Mammary epithelial cell (primary cell): ENCODE measurements at regions of chr1 and their contacts with region 1.

Region 1: DNA sequence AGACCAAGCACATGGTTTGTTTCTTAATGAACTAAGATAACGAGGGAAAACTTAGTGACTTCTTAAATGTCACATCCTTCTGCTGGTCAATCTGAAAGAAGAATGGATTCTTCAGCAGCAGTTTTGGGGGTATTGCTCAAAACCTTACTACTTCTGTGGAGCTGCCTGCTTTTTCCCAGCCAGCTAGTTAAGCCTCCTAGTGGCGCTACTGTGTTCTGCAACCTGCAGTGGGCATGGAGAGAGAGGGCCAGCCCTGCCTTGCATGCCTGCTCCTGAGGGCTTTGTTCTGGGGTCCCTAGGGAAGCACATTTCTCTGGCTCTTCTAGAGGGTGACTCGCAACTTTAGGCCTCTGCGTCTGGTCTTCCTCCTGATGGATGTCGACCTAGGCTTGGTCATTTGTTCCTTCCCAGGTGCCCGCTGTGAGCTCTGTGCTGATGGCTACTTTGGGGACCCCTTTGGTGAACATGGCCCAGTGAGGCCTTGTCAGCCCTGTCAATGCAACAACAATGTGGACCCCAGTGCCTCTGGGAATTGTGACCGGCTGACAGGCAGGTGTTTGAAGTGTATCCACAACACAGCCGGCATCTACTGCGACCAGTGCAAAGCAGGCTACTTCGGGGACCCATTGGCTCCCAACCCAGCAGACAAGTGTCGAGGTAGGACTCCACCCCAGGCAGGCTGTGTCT is 42.0 kb downstream of the LAMC2 start:
- DNase-seq: no peak
- H3K4me3 ChIP-seq: no peak overlapping the region
- H3K27ac ChIP-seq: no peak overlapping the region
- H3K4me1 ChIP-seq: peaks cover 52% of the 10 kb centered on the region
- H3K27me3 ChIP-seq: no peaks in the 10 kb centered on the region
- CTCF ChIP-seq: peak; percentile 75 to 79

Region 2: DNA sequence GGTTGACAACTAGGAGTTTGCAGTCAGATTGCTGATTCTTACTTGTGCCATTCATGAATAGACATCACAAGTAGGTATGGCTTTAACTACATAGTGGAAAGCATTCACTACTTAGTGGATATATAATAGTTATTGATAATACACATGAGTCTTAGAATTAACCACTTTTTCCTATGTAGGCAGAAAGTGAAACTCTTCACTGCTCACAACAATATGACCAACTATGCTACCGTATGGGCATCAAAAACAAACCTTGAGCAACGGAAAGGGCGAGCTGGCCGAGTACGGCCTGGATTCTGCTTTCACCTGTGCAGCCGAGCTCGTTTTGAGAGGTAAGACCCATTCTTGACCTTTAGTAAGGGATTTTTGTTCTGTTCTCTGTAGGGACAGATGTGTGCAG is 350.3 kb before region 1 on chr1:
- CTCF ChIA-PET with region 1: no interaction called
- dilution Hi-C with region 1: no loop called
- in situ Hi-C with region 1: loop called in 1 of 2 experiments (anchors 10 kb)
- intact Hi-C with region 1: loop called (anchors 5 kb)
- DNase-seq: no peak
- H3K4me3 ChIP-seq: no peak overlapping the region
- H3K27ac ChIP-seq: no peak overlapping the region
- H3K4me1 ChIP-seq: no peaks in the 10 kb centered on the region
- H3K27me3 ChIP-seq: no peaks in the 10 kb centered on the region
- CTCF ChIP-seq: no peak

Region 3: DNA sequence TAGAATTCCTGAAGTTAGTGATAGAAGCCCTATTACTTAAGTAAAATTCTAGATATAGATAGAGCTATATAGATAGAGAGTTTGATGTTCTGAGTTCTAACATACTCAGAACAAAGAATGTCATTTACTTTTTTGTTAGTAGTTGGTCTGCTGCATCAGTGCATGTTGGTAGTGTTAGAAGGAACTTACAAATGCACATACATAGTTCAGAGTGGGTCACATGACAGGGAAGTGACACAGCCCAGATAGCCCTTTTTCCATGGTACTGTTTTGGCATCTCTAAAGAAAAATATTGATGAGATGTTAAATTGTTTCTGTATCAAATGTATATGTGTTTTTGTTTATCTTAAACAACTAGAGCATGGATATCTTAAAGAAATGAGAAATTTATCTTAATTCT is 343.2 kb before region 1 on chr1:
- CTCF ChIA-PET with region 1: no interaction called
- dilution Hi-C with region 1: no loop called
- in situ Hi-C with region 1: no loop called
- intact Hi-C with region 1: loop called (anchors 5 kb)
- DNase-seq: no peak
- H3K4me3 ChIP-seq: no peak overlapping the region
- H3K27ac ChIP-seq: no peak overlapping the region
- H3K4me1 ChIP-seq: no peaks in the 10 kb centered on the region
- H3K27me3 ChIP-seq: no peaks in the 10 kb centered on the region
- CTCF ChIP-seq: no peak